ENCODE measurements at regions of chr7 and their contacts with region 1.

Region 1: DNA sequence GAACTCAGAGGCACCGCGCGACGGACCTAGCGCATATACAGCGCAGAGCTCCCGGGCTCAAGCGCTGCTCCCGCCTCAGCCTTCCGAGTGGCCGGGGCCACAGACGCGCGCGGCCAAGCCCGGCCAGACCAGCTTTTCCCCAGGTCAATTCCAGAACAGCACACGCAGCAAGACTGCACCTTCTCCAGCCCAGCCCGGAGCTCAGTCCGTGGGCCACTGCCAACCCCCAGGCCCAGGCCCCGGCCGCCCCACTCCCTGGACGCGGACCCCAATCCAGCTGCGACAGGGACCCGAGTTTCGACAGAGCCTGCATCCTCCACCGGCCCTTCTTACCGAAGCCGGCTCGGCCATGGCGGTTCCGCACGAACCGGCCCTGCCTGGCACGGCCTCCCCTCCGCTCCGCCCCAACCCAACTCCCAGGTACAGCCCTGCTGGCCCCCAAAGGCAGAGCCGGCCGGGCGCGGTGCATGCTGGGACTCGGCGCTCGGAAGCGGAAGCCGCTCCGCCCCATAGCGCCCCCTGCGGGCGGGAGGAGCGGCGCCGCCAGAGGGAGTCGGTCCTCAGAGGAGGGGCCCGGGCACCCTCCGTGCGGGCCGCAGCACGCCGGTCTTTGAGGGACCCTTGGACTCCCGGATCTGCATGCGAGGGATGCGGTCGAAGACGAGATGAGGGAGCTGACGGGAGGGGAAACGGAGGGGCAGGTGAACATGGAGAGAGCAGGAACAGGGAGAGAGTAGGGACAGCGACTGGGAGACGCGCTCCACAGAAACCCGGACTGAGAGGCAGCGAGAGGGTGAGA is at the start of gene ZNF425:
- DNase-seq: peak; percentile 82 to 97 (median 91)
- ATAC-seq: peak; percentile 87 to 93 (median 88)
- H3K4me3 ChIP-seq: peak within 1 kb of the TSS; percentile 92 to 95
- H3K4me3 Mint-ChIP-seq: peak within 1 kb of the TSS; percentile 95 to 100 (median 100)
- H3K27ac ChIP-seq: peak within 1 kb of the TSS; percentile 85
- H3K27ac Mint-ChIP-seq: peak within 1 kb of the TSS; percentile 99 to 100
- H3K4me1 ChIP-seq: peaks cover 6 to 13% of the 10 kb centered on the region in 2 experiments
- H3K4me1 Mint-ChIP-seq: peaks cover 20 to 29% (median 21%) of the 10 kb centered on the region in 3 donors
- H3K27me3 ChIP-seq: peaks cover 0 to 2% of the 10 kb centered on the region in 2 experiments
- H3K27me3 Mint-ChIP-seq: no peaks in the 10 kb centered on the region
- total RNA-seq, gene ZNF425: 0.28 to 2.7 (median 1.9) TPM

Region 2: GRCh38 chr7:148738737-148739535 is 387.1 kb before region 1 on chr7:
- CTCF ChIA-PET with region 1: no interaction called
- POLR2A ChIA-PET with region 1: no interaction called
- DNase-seq: no peak
- ATAC-seq: no peak
- H3K4me3 ChIP-seq: no peak overlapping the region
- H3K4me3 Mint-ChIP-seq: no peak overlapping the region
- H3K27ac ChIP-seq: no peak overlapping the region
- H3K27ac Mint-ChIP-seq: no peak overlapping the region
- H3K4me1 ChIP-seq: no peaks in the 10 kb centered on the region
- H3K4me1 Mint-ChIP-seq: peaks cover 28 to 34% (median 32%) of the 10 kb centered on the region in 3 donors
- H3K27me3 ChIP-seq: no peaks in the 10 kb centered on the region
- H3K27me3 Mint-ChIP-seq: no peaks in the 10 kb centered on the region

Region 3: DNA sequence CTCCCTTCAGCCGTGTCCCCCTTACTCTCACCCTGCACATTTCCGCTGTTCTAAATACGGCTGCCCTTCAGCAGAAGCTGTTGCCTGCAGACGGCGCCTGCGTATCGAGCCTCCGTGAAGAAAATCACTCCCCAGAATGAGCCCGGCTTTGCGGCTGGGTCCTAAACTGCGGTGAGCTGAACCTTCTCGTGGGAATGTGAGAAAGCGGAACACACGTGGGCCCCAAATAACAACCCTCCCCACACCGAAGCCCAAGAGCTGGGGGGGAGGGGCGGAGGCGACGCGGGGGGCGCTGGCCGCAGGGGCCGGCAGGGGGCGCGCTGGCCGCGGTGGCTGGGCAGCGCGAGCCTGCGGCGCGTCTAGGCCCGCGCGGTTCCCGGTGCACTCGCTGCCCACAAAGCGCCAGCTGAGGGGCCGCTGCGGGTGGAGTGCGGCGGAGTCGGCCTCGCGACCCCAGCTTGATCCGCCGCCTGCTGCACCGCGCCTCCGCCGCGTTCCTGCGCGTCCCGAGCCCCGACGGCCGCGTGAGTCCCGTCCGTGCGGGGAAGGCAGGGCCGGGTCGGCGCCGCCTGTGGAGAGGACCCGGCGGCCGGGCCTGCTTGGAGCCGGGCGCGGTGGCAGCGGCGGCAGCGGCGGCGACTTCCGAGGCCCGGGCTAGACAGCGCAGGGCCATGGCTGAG is 21.1 kb after region 1 on chr7 and contains the start of gene ZNF398:
- CTCF ChIA-PET with region 1: interaction called, 6 to 27 read pairs
- POLR2A ChIA-PET with region 1: interaction called, 3 to 6 read pairs
- DNase-seq: peak; percentile 59 to 93 (median 73)
- ATAC-seq: peak; percentile 79 to 87 (median 82)
- H3K4me3 ChIP-seq: peak within 1 kb of the TSS; percentile 90 to 95
- H3K4me3 Mint-ChIP-seq: peak within 1 kb of the TSS; percentile 86 to 90 (median 87)
- H3K27ac ChIP-seq: peak within 1 kb of the TSS; percentile 78
- H3K27ac Mint-ChIP-seq: peak within 1 kb of the TSS; percentile 90 to 94
- H3K4me1 ChIP-seq: peaks cover 11 to 28% of the 10 kb centered on the region in 2 experiments
- H3K4me1 Mint-ChIP-seq: peaks cover 33 to 43% (median 42%) of the 10 kb centered on the region in 3 donors
- H3K27me3 ChIP-seq: no peaks in the 10 kb centered on the region
- H3K27me3 Mint-ChIP-seq: no peaks in the 10 kb centered on the region
- total RNA-seq, gene ZNF398: 15.1 to 31.0 (median 28.4) TPM